ENCODE measurements at regions of chr3 and their contacts with region 1.

Region 1: GRCh38 chr3:52339612-52340011 is 23.5 kb downstream of the DNAH1 start:
- DNase-seq: peak; percentile 63
- ATAC-seq: peak; percentile 84
- H3K4me3 Mint-ChIP-seq: no peak overlapping the region
- H3K27ac Mint-ChIP-seq: no peak overlapping the region
- H3K4me1 Mint-ChIP-seq: peaks cover 3% of the 10 kb centered on the region
- H3K27me3 Mint-ChIP-seq: no peaks in the 10 kb centered on the region
- CTCF ChIP-seq: peak; percentile 88

Region 2: GRCh38 chr3:52220380-52221026 is 119.1 kb before region 1 on chr3:
- CTCF ChIA-PET with region 1: interaction called, 223 read pairs
- POLR2A ChIA-PET with region 1: interaction called, 3 read pairs
- intact Hi-C with region 1: loop called (anchors 2 kb)
- DNase-seq: peak; percentile 95
- ATAC-seq: peak; percentile 71
- H3K4me3 Mint-ChIP-seq: peak overlapping the region; percentile 12
- H3K27ac Mint-ChIP-seq: no peak overlapping the region
- H3K4me1 Mint-ChIP-seq: peaks cover 83% of the 10 kb centered on the region
- H3K27me3 Mint-ChIP-seq: no peaks in the 10 kb centered on the region
- CTCF ChIP-seq: peak; percentile 79

Region 3: GRCh38 chr3:52253314-52254304 is 86.0 kb before region 1 on chr3:
- CTCF ChIA-PET with region 1: interaction called, 16 read pairs
- POLR2A ChIA-PET with region 1: no interaction called
- intact Hi-C with region 1: no loop called
- DNase-seq: peak; percentile 96
- ATAC-seq: peak; percentile 88
- H3K4me3 Mint-ChIP-seq: peak overlapping the region; percentile 70
- H3K27ac Mint-ChIP-seq: peak overlapping the region; percentile 99
- H3K4me1 Mint-ChIP-seq: peaks cover 85% of the 10 kb centered on the region
- H3K27me3 Mint-ChIP-seq: no peaks in the 10 kb centered on the region
- CTCF ChIP-seq: no peak

Region 4: DNA sequence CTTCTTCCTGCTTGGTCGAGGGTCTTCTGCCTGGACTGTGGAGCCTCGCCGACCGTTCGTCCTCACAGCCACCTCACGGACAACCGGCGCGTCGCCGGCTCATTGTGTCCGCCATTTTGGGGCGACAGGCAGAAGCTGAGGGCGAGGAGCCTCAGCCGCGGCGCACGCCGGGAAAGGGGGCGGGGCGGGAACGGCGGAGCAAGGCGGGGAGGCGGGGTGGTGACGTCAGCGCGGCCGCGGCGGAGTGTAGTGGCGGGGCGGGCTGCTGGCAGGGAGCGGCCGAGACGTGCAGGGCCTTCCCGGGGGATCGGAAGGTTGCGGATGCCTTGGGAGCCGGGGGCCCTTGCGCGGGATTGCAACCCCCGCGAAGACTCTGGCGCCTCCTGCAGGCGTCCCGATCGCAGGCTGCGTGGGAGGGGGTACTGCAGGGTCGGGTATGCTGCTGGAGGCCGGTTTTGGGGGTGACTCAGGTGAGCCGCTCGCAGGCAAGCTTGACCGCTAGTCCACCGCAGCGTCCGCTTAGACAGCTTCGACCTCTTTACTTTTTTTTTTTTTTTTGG is 61.0 kb before region 1 on chr3 and contains the start of gene WDR82:
- CTCF ChIA-PET with region 1: interaction called, 264 read pairs
- POLR2A ChIA-PET with region 1: interaction called, 3 read pairs
- intact Hi-C with region 1: no loop called
- DNase-seq: peak; percentile 98
- ATAC-seq: peak; percentile 72
- H3K4me3 Mint-ChIP-seq: peak within 1 kb of the TSS; percentile 99
- H3K27ac Mint-ChIP-seq: peak within 1 kb of the TSS; percentile 96
- H3K4me1 Mint-ChIP-seq: peaks cover 50% of the 10 kb centered on the region
- H3K27me3 Mint-ChIP-seq: no peaks in the 10 kb centered on the region
- CTCF ChIP-seq: peak; percentile 69
- total RNA-seq, gene WDR82: 103 to 105 TPM

Region 5: GRCh38 chr3:52313774-52314188 is 25.8 kb before region 1 on chr3:
- CTCF ChIA-PET with region 1: interaction called, 19 read pairs
- POLR2A ChIA-PET with region 1: no interaction called
- intact Hi-C with region 1: no loop called
- DNase-seq: peak; percentile 53
- ATAC-seq: peak; percentile 31
- H3K4me3 Mint-ChIP-seq: no peak overlapping the region
- H3K27ac Mint-ChIP-seq: peak overlapping the region; percentile 71
- H3K4me1 Mint-ChIP-seq: peaks cover 63% of the 10 kb centered on the region
- H3K27me3 Mint-ChIP-seq: no peaks in the 10 kb centered on the region
- CTCF ChIP-seq: no peak

Region 6: DNA sequence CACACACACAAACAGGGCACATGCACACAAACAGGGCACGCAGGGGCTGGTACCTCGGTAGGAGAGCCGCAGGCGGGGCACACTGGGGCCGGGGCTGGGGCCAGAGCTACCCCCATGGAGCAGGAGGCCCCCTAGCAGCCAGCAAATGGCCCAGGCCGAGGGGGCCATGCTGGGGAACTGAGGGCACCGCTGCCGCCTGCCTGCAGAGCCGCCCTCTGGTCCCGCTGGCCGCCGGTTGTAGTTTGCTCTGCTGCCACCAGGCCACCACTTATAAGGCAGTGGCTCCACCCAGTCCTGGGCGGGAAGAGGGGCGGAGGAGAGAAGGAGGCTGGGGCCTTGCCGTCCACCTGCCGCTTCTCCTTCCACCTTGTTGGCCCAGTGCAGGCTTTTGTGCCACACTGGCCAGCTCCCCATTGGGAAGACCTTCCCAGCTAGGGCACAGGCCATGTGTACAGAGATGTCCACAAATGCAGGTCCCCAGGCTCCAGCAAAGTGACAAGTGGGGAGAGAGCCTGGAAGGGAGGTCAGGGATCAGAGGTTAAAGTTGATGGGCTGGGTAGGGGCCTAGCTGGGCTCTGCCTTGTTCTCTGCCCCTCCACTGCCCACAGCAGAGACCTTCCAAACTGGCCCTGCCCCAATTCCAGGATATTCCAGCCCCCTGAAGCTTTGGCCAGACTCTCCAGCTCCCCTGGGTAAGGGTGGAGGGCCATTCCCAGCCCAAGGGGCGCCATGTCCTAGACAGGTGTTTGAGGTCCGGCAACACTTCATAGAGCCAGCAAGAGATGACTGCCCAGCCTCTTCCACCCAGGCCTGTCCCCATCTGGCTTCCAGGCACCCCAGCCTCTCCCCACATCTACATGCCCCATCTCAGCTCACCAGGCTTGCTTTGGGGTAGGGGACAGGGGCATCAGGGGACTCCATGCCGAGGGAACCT is 105.5 kb after region 1 on chr3 and contains the start of gene SEMA3G:
- CTCF ChIA-PET with region 1: interaction called, 30 read pairs
- POLR2A ChIA-PET with region 1: no interaction called
- intact Hi-C with region 1: no loop called
- DNase-seq: peak; percentile 91
- ATAC-seq: peak; percentile 97
- H3K4me3 Mint-ChIP-seq: no peak within 1 kb of the TSS
- H3K27ac Mint-ChIP-seq: no peak within 1 kb of the TSS
- H3K4me1 Mint-ChIP-seq: peaks cover 4% of the 10 kb centered on the region
- H3K27me3 Mint-ChIP-seq: no peaks in the 10 kb centered on the region
- CTCF ChIP-seq: peak; percentile 64
- total RNA-seq, gene SEMA3G: not detected

Measured in activated CD8-positive, alpha-beta T cell treated with anti-CD3 and anti-CD28 coated beads for 36 hours (primary cell).